Activated T-helper 1 cell treated with anti-CD3 and anti-CD28 coated beads, Interleukin-12 subunit alpha, Interleukin-12 subunit beta, Interleukin-2, Interleukin-4 antibody, amounts not matched to agents 30 ng/mL and 10 ng/mL and 1 ng/mL, durations not matched to agents 14 hours and 24 hours and 36 hours (primary cell): ENCODE measurements at regions of chr1 and their contacts with region 1.

Region 1: GRCh38 chr1:110990536-110990935 is 26.8 kb upstream of the LRIF1 start:
- DNase-seq: no peak
- H3K4me3 Mint-ChIP-seq: no peak overlapping the region
- H3K27ac Mint-ChIP-seq: no peak overlapping the region
- H3K4me1 Mint-ChIP-seq: peaks cover 5% of the 10 kb centered on the region
- H3K27me3 Mint-ChIP-seq: peaks cover 25% of the 10 kb centered on the region

Region 2: GRCh38 chr1:110829955-110830553 is 160.5 kb before region 1 on chr1:
- intact Hi-C with region 1: loop called (anchors 2 kb)
- DNase-seq: peak; percentile 5
- H3K4me3 Mint-ChIP-seq: no peak overlapping the region
- H3K27ac Mint-ChIP-seq: no peak overlapping the region
- H3K4me1 Mint-ChIP-seq: peaks cover 6% of the 10 kb centered on the region
- H3K27me3 Mint-ChIP-seq: peaks cover 21% of the 10 kb centered on the region

Region 3: GRCh38 chr1:110927484-110928075 is 63.0 kb before region 1 on chr1:
- intact Hi-C with region 1: no loop called
- DNase-seq: no peak
- H3K4me3 Mint-ChIP-seq: no peak overlapping the region
- H3K27ac Mint-ChIP-seq: no peak overlapping the region
- H3K4me1 Mint-ChIP-seq: no peaks in the 10 kb centered on the region
- H3K27me3 Mint-ChIP-seq: peaks cover 3% of the 10 kb centered on the region